OCI-LY7 (cell line): ENCODE measurements at regions of chr6 and their contacts with region 1.

Region 1: GRCh38 chr6:33391278-33391921 is at the start of gene KIFC1:
- DNase-seq: peak; percentile 100
- H3K4me3 ChIP-seq: peak within 1 kb of the TSS; percentile 94
- H3K27ac ChIP-seq: peak within 1 kb of the TSS; percentile 90
- H3K4me1 ChIP-seq: peaks cover 35% of the 10 kb centered on the region
- CTCF ChIP-seq: peak; percentile 87
- total RNA-seq, gene KIFC1: 133 and 138 TPM in 2 replicates

Region 2: DNA sequence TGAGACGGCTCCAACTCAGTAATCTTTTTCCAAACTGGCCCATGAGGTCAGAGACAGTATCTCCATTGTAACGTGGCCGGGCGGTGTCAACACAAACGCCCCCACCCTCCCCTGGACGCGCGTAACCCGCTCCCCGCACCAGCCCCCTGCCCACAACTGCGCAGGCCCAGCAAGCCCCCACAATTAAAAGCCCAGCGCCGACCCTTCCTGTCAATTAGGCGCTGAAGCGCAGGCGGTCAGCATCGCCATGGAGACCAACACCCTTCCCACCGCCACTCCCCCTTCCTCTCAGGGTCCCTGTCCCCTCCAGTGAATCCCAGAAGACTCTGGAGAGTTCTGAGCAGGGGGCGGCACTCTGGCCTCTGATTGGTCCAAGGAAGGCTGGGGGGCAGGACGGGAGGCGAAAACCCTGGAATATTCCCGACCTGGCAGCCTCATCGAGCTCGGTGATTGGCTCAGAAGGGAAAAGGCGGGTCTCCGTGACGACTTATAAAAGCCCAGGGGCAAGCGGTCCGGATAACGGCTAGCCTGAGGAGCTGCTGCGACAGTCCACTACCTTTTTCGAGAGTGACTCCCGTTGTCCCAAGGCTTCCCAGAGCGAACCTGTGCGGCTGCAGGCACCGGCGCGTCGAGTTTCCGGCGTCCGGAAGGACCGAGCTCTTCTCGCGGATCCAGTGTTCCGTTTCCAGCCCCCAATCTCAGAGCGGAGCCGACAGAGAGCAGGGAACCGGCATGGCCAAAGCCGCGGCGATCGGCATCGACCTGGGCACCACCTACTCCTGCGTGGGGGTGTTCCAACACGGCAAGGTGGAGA is 1576.2 kb before region 1 on chr6 and contains the starts of genes HSPA1A and HSPA1L:
- CTCF ChIA-PET with region 1: no interaction called
- POLR2A ChIA-PET with region 1: no interaction called
- intact Hi-C with region 1: loop called (anchors 10 kb)
- DNase-seq: no peak
- H3K4me3 ChIP-seq: no peak within 1 kb of the TSS
- H3K27ac ChIP-seq: no peak within 1 kb of the TSS
- H3K4me1 ChIP-seq: peaks cover 13% of the 10 kb centered on the region
- CTCF ChIP-seq: no peak
- total RNA-seq, gene HSPA1A: 0.22 and 0.41 TPM in 2 replicates
- total RNA-seq, gene HSPA1L: 0.19 TPM in 1 of 2 replicates, not detected in the other

Region 3: GRCh38 chr6:32971581-32972352 is 419.6 kb before region 1 on chr6:
- CTCF ChIA-PET with region 1: no interaction called
- POLR2A ChIA-PET with region 1: no interaction called
- intact Hi-C with region 1: no loop called
- DNase-seq: peak; percentile 100
- H3K4me3 ChIP-seq: peak overlapping the region; percentile 93
- H3K27ac ChIP-seq: peak overlapping the region; percentile 99
- H3K4me1 ChIP-seq: peaks cover 27% of the 10 kb centered on the region
- CTCF ChIP-seq: no peak

Region 4: GRCh38 chr6:33061987-33062386 is 329.4 kb before region 1 on chr6:
- CTCF ChIA-PET with region 1: no interaction called
- POLR2A ChIA-PET with region 1: no interaction called
- intact Hi-C with region 1: no loop called
- DNase-seq: peak; percentile 81
- H3K4me3 ChIP-seq: no peak overlapping the region
- H3K27ac ChIP-seq: peak overlapping the region; percentile 49
- H3K4me1 ChIP-seq: peaks cover 29% of the 10 kb centered on the region
- CTCF ChIP-seq: no peak

Region 5: GRCh38 chr6:33264015-33264414 is 127.4 kb before region 1 on chr6:
- CTCF ChIA-PET with region 1: no interaction called
- POLR2A ChIA-PET with region 1: no interaction called
- intact Hi-C with region 1: no loop called
- DNase-seq: no peak
- H3K4me3 ChIP-seq: no peak overlapping the region
- H3K27ac ChIP-seq: no peak overlapping the region
- H3K4me1 ChIP-seq: no peaks in the 10 kb centered on the region
- CTCF ChIP-seq: no peak

Region 6: DNA sequence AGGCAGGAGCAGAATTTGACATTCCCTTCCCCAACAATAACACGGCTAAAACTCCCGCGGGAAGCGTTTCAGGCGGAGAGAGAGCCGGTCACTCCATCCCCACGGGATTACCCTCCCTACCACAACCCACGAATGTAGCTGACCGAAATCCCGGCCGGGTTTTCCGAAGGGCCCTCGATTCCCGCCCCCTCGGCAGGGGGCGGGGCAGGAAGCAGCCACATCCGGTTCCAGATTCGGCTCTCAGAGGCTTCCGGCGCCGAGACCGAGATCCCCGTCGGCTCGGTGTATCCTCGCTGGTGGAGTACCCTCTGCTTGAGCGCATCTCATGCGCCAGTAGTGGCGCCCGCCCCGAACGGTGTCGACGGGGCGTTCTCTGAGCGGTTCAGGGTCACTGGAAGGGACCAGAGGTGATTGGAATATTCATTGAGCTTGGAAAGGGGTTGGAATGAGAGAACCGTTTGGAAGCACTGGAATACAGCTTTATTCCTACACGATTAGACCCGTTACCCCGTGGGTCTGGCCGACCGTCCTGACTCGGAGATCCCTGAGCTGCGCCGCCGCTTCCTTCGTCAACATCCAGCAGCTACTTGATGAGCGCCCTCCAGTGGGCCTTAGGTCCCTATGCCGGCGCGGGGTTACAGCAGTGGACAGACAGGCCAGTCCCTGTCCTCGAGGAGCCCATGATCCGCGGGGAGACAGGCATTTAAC is 92.0 kb before region 1 on chr6:
- CTCF ChIA-PET with region 1: no interaction called
- POLR2A ChIA-PET with region 1: no interaction called
- intact Hi-C with region 1: loop called (anchors 5 kb)
- DNase-seq: peak; percentile 96
- H3K4me3 ChIP-seq: peak overlapping the region; percentile 83
- H3K27ac ChIP-seq: peak overlapping the region; percentile 93
- H3K4me1 ChIP-seq: peaks cover 21% of the 10 kb centered on the region
- CTCF ChIP-seq: peak; percentile 78

Region 7: GRCh38 chr6:33330736-33331135 is 60.7 kb before region 1 on chr6:
- CTCF ChIA-PET with region 1: no interaction called
- POLR2A ChIA-PET with region 1: no interaction called
- intact Hi-C with region 1: no loop called
- DNase-seq: no peak
- H3K4me3 ChIP-seq: no peak overlapping the region
- H3K27ac ChIP-seq: no peak overlapping the region
- H3K4me1 ChIP-seq: peaks cover 23% of the 10 kb centered on the region
- CTCF ChIP-seq: no peak

Region 8: GRCh38 chr6:33344701-33345697 is 46.4 kb before region 1 on chr6:
- CTCF ChIA-PET with region 1: no interaction called
- POLR2A ChIA-PET with region 1: interaction called, 6 read pairs
- intact Hi-C with region 1: loop called (anchors 1 kb)
- DNase-seq: peak; percentile 91
- H3K4me3 ChIP-seq: peak overlapping the region; percentile 39
- H3K27ac ChIP-seq: peak overlapping the region; percentile 86
- H3K4me1 ChIP-seq: peaks cover 49% of the 10 kb centered on the region
- CTCF ChIP-seq: peak; percentile 75

Region 9: DNA sequence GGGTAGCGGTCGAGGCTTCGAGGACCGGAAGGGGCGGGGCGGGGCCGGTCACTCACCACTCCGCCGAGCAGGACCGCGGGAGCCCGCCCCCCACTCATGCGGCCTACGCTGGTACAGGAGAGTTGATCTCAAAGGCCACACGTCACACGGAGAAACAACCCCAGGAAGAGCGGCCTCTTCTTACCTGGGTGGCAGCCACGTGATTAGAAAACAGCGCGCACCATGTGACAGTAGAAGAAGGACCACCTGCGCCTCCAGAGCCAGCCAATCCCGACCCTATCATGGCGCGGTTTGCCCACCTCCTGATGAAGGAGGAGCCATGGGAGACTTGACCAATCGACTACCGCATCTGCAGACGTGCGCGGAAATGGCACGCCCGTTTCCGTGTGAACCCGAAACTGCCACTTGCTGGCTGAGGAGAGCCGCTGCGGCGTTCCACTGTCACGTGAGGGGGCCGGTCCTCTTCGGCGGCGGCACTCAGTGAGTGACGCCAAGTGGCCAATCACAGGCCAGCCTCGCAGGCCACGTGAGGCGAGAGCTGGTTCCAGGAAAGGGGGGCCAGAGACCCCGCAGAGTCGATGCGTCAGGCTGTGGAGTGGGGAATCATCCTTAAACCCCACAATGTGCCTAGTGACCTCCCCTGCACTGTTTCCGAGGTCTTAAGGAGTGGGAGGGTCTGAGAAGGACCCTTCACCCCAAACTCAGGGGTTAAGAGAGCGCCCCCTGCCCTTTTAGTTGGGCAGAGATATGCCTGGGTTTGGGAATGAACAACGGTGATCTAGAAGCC is 26.7 kb after region 1 on chr6 and contains the start of gene CUTA:
- CTCF ChIA-PET with region 1: interaction called, 3 read pairs
- POLR2A ChIA-PET with region 1: no interaction called
- intact Hi-C with region 1: loop called (anchors 1 kb)
- DNase-seq: peak; percentile 100
- H3K4me3 ChIP-seq: peak within 1 kb of the TSS; percentile 77
- H3K27ac ChIP-seq: peak within 1 kb of the TSS; percentile 76
- H3K4me1 ChIP-seq: peaks cover 56% of the 10 kb centered on the region
- CTCF ChIP-seq: peak; percentile 80
- total RNA-seq, gene CUTA: 147 and 164 TPM in 2 replicates